Heart right ventricle (tissue), 16 donors: ENCODE measurements at regions of chr21 and their contacts with region 1.

Region 1: DNA sequence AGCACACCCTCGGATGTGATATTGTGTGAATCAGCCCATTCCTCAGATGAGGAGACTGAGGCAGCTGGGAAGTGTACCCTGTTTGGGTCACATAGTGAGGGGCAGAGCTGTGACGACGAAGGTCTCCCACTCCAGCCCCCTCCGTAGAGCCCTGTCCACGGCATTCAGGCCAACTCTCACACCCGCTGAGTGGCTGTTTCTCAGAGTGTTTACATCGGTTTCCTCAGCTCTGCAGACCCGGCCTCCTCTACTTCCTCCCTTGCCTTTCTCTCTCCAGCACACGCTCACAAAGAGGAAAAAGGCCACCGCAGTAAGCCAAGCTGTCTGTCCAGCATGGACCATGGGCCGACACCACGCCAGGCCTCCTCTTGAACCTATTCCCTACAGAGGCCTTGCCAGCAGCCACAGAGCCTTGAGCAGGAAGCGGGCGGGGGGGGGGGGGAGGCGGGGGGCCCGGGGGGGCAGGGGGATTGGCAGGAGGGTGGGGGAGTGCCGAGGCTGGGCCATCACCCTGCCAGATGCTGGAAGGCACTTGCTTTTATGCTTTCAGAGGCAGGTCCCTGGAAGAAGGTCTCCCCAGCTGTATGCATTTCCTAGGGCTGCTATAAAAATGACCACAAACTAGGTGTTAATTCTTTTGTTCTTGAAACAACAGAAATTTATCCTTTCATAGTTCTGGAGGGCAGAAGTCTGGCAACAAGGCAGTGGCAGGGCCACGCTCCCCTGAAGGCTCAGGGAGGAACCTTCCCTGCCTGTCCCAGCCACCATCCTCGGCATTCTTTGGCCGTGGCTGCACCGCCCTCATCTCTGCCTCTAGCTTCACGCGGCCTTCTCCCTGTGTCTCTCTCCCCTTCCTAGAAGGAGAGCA is 178.4 kb downstream of the PSMG1 start:
- DNase-seq: peak; percentile 65 to 78
- ATAC-seq: peak; percentile 38 to 74 (median 65)
- H3K4me3 ChIP-seq: no peak overlapping the region
- H3K27ac ChIP-seq: peak overlapping the region; percentile 74 to 92 (median 84)
- H3K4me1 ChIP-seq: peaks cover 13 to 91% (median 76%) of the 10 kb centered on the region in 9 donors
- H3K27me3 ChIP-seq: no peaks in the 10 kb centered on the region
- CTCF ChIP-seq: no peak

Region 2: DNA sequence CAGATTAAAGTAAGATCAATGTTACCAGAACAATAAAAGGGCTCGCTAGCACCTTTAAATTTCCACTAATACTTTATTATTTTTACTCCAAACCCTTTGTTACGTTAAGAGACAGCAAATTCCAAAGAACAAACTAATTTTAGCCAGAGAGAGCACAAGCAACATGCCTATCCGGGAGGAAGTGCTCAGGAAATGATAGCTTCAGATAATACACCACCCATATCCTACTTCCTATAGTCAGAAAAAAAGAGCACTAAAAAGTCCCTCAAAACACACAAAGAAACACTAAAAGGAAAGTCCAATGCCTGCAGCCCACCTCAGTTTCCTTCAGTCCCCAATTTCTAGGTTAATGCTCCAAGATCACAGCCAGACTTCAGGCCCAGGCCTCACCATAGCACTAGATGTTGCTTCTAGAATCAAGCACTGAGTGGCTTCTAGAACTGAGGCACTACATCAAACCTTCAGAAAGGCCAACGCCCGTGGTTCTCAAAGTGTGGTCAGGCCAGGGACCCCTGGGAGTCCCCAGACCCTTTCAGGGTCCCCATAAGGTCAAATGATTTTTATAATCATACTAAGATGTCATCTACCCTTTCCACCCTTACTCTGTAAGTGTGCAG is 35.7 kb after region 1 on chr21:
- intact Hi-C with region 1: loop called in 1 of 10 experiments (anchors 5 kb)
- DNase-seq: no peak
- ATAC-seq: peak; percentile 38 to 91 (median 84)
- H3K4me3 ChIP-seq: no peak overlapping the region
- H3K27ac ChIP-seq: peak overlapping the region; percentile 59 to 91 (median 72)
- H3K4me1 ChIP-seq: peaks cover 0 to 39% (median 17%) of the 10 kb centered on the region in 9 donors
- H3K27me3 ChIP-seq: no peaks in the 10 kb centered on the region
- CTCF ChIP-seq: no peak

Region 3: GRCh38 chr21:39051588-39051949 is 46.7 kb after region 1 on chr21:
- intact Hi-C with region 1: loop called in 2 of 10 experiments (anchors 5 to 10 kb)
- DNase-seq: no peak
- ATAC-seq: no peak
- H3K4me3 ChIP-seq: no peak overlapping the region
- H3K27ac ChIP-seq: peak overlapping the region in 6 of 10 donors; percentile 24 to 65 (median 38)
- H3K4me1 ChIP-seq: peaks cover 8 to 53% (median 27%) of the 10 kb centered on the region in 9 donors
- H3K27me3 ChIP-seq: no peaks in the 10 kb centered on the region
- CTCF ChIP-seq: no peak

Region 4: GRCh38 chr21:39066829-39067780 is 62.2 kb after region 1 on chr21:
- intact Hi-C with region 1: loop called in 1 of 10 experiments (anchors 10 kb)
- DNase-seq: peak in 1 of 2 donors; percentile 39
- ATAC-seq: peak; percentile 75 to 86 (median 81)
- H3K4me3 ChIP-seq: no peak overlapping the region
- H3K27ac ChIP-seq: peak overlapping the region; percentile 17 to 78 (median 60)
- H3K4me1 ChIP-seq: peaks cover 9 to 38% (median 23%) of the 10 kb centered on the region in 9 donors
- H3K27me3 ChIP-seq: no peaks in the 10 kb centered on the region
- CTCF ChIP-seq: peak in 5 of 9 donors; percentile 21 to 53 (median 27)

Region 5: DNA sequence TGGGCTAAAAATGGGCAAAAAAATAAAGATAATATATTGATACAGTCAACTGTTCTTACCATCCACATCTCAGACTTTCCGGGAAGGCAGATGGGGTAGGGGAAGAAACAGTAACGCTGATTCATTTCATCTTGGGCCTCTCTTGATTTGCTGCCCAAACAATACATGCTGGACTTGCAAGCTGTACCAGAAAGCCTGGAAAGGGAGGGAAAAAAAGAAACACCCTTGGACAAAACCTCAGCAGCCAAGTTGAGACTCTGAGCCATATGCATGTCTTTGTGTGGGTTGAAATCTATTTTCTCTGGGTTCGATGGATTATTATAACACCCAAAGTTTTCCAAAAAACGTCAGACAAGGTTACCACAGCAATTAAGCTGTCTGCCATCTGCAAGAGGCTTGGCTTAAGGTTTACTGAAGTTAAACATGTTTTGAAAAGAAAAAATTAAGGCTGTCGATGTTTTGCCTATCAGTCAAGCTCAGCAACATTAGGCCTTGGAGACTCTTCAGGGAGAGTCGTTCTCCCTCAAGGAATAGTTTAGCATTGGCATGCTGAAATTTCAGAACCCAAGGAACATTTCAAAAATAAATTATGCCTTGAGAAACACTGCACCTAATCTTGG is 107.2 kb after region 1 on chr21:
- intact Hi-C with region 1: no loop called
- DNase-seq: no peak
- ATAC-seq: peak in 4 of 8 donors; percentile 19 to 62 (median 29)
- H3K4me3 ChIP-seq: no peak overlapping the region
- H3K27ac ChIP-seq: peak overlapping the region in 3 of 10 donors; percentile 17 to 39 (median 36)
- H3K4me1 ChIP-seq: peaks cover 0 to 24% (median 13%) of the 10 kb centered on the region in 9 donors
- H3K27me3 ChIP-seq: no peaks in the 10 kb centered on the region
- CTCF ChIP-seq: no peak

Region 6: DNA sequence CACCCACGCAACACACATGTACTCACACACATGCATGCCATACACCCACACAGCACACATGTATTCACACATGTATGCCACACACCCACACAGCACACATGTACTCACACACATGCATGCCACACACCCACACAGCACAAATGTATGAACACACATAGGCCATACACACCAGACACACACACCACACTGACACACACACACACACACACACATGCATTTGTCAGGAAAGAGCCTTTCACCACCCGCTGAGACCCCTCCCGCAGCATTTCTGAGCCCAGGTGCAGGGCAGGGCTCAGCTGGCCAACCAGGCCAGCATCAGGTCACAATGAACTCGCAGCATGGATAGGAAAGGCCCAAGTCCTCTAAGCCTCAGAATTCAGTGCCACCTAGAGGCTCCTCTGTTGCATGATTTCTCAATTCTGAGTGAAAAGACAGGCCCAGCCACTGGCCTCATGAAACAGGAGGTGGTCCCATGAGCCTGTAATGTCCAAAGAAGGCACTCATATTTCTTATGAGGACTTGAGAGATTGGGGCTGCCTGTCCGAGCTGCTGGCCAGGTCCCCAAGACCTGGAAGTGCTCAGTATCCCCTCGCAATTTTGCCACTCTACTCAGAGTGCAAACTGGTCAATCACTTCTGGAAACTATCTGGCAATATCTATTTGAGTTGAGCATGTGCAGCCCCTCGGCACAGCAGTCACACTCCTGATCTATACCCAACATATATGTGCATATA is 121.1 kb after region 1 on chr21:
- intact Hi-C with region 1: loop called in 1 of 10 experiments (anchors 10 kb)
- DNase-seq: peak in 1 of 2 donors; percentile 67
- ATAC-seq: peak; percentile 89 to 96 (median 94)
- H3K4me3 ChIP-seq: no peak overlapping the region
- H3K27ac ChIP-seq: peak overlapping the region in 4 of 10 donors; percentile 4 to 68 (median 52)
- H3K4me1 ChIP-seq: peaks cover 0 to 25% (median 13%) of the 10 kb centered on the region in 9 donors
- H3K27me3 ChIP-seq: no peaks in the 10 kb centered on the region
- CTCF ChIP-seq: peak; percentile 43 to 81 (median 69)

Region 7: DNA sequence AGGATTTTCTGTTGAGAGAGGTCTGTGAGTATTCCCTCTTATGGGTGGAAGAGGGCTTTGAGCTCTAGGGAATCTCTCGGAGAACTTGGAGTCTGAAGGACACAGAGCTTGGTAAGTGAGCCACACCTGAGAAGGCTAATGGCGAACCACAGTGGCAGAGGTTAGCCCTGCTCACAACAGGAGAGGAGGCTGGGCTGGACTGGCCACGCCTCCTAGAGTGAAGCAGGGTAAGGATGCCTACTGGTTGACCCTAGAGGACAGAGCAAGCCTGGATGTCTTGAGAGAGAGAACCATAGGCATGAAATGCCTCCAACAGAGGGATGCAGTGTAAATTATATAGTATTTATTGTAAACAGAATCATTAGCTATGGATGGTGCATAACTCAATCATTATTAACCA is 1094.9 kb after region 1 on chr21:
- intact Hi-C with region 1: no loop called
- DNase-seq: no peak
- ATAC-seq: no peak
- H3K4me3 ChIP-seq: no peak overlapping the region
- H3K27ac ChIP-seq: no peak overlapping the region
- H3K4me1 ChIP-seq: peaks cover 0 to 3% (median 0%) of the 10 kb centered on the region in 9 donors
- H3K27me3 ChIP-seq: peaks cover 0 to 3% (median 0%) of the 10 kb centered on the region in 7 donors
- CTCF ChIP-seq: no peak